WTC11 (cell line): ENCODE measurements at regions of chr16 and their contacts with region 1.

Region 1: DNA sequence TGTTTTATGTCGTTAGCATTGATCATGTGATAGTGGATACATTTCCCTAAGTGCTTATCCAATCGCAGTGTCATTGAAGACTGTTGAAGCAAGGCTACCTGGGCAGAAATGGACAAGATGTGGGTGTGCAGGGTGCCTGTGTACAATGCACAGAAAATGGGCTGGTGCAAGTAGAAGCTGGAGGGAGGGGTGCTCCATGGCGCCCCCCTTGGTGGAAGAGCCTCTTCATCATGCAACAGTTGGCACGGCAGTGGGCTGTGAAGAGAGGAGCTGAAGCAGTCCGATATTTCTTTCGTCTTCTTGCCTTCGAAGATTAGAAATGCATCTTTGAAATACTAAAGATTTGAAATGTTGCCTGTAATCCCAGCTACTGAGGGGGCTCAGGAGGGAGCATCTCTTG is 100.5 kb downstream of the PLCG2 start:
- DNase-seq: peak; percentile 68
- ATAC-seq: peak; percentile 74
- H3K4me3 Mint-ChIP-seq: no peak overlapping the region
- H3K27ac Mint-ChIP-seq: no peak overlapping the region
- H3K4me1 Mint-ChIP-seq: peaks cover 24% of the 10 kb centered on the region
- H3K27me3 Mint-ChIP-seq: no peaks in the 10 kb centered on the region
- CTCF ChIP-seq: peak; percentile 83

Region 2: DNA sequence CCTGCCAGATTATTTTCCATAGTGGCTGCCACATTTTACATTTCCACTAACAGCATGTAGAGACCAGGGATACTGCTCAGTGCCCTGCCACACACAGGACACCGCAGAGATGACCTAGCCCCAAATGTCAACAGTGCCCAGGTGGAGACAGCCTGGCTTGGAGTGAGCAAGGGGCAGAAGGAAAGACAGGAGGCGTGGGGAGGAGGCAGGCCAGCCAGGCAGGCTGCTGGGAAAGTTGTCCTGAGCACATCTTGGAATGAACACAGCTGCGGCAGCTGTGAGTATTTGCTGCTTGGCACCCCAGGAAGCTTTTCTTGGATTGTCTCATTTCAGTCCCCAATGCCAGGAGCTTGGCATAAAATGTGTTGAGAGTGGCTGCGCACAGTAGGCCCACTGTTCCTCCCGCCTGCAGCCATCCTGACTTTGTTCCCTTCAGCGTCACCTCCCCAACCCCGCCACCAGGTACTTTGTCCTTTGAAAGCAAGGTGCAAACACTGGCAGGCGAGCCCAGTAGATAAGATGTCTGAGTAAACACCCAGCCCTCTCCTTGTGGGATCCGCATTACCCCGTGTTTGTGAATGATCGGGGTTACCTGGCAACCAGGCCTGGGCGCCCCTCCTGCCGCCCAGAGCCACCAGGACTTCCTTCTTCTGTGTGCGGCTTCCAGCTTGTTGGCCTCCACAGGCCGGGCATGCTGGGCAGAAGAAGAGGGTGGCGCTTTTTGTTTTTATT is 321.0 kb before region 1 on chr16:
- CTCF ChIA-PET with region 1: no interaction called
- POLR2A ChIA-PET with region 1: no interaction called
- DNase-seq: no peak
- ATAC-seq: peak; percentile 62
- H3K4me3 Mint-ChIP-seq: no peak overlapping the region
- H3K27ac Mint-ChIP-seq: no peak overlapping the region
- H3K4me1 Mint-ChIP-seq: peaks cover 14% of the 10 kb centered on the region
- H3K27me3 Mint-ChIP-seq: no peaks in the 10 kb centered on the region
- CTCF ChIP-seq: no peak

Region 3: GRCh38 chr16:81730090-81731051 is 149.3 kb before region 1 on chr16:
- CTCF ChIA-PET with region 1: interaction called, 17 read pairs
- POLR2A ChIA-PET with region 1: no interaction called
- DNase-seq: peak; percentile 99
- ATAC-seq: peak; percentile 96
- H3K4me3 Mint-ChIP-seq: peak overlapping the region; percentile 64
- H3K27ac Mint-ChIP-seq: peak overlapping the region; percentile 96
- H3K4me1 Mint-ChIP-seq: peaks cover 30% of the 10 kb centered on the region
- H3K27me3 Mint-ChIP-seq: no peaks in the 10 kb centered on the region
- CTCF ChIP-seq: peak; percentile 80

Region 4: DNA sequence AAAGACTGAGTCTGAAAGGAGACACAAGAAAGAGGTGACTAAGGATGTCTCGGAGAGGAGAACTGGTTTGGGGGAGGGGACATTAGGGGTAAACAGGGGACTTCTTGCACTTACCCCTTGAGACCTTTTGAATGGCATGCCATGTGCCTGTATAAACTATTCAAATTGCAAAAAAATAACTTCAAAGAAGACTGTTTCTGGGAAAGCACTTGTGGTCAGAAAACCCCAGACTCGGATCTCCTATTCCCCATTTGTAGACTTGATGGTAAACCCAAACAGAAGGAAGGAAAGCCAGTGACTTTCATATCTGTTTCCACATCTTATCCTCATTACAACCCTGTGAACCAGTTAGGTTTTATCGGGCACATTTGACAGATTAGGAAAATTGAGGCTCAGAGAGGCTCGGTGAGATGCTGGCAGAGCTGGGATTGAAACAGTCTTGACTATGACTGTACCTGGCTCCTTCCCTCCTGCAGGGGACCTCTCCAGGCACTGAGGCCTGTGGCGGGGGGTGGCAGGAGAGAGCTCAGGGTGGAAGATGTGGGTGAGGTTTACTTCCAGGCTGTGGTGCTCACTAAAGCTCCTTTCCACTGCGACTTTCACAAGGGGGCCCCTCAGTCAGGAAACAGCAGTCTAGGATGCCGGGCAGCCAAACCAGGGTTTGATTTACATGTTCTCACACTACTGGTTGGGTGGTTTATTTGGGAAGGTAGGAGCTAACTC is 131.0 kb before region 1 on chr16:
- CTCF ChIA-PET with region 1: interaction called, 12 read pairs
- POLR2A ChIA-PET with region 1: no interaction called
- DNase-seq: no peak
- ATAC-seq: peak; percentile 45
- H3K4me3 Mint-ChIP-seq: no peak overlapping the region
- H3K27ac Mint-ChIP-seq: no peak overlapping the region
- H3K4me1 Mint-ChIP-seq: peaks cover 19% of the 10 kb centered on the region
- H3K27me3 Mint-ChIP-seq: peaks cover 5% of the 10 kb centered on the region
- CTCF ChIP-seq: no peak

Region 5: DNA sequence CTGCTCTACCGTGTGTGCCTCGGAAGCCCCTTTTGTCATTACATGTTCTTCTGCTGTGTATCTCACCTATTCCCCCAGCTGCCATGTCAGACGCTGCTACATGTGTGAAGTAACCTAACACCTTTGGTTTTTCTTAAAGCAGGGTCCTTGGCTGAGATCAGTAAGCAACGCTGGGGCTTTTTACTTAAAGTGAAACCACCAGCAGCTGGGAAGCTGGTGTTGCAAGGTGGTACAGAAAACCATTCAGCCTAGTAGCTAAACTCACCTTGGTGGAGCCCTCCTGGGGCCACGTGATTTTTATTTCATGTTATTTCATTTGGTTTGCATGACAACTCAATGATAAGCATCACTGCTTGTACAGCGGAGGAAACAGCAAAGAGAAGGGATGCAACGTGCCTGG is 37.9 kb before region 1 on chr16:
- CTCF ChIA-PET with region 1: interaction called, 13 read pairs
- POLR2A ChIA-PET with region 1: no interaction called
- DNase-seq: no peak
- ATAC-seq: no peak
- H3K4me3 Mint-ChIP-seq: no peak overlapping the region
- H3K27ac Mint-ChIP-seq: no peak overlapping the region
- H3K4me1 Mint-ChIP-seq: peaks cover 9% of the 10 kb centered on the region
- H3K27me3 Mint-ChIP-seq: no peaks in the 10 kb centered on the region
- CTCF ChIP-seq: no peak

Region 6: DNA sequence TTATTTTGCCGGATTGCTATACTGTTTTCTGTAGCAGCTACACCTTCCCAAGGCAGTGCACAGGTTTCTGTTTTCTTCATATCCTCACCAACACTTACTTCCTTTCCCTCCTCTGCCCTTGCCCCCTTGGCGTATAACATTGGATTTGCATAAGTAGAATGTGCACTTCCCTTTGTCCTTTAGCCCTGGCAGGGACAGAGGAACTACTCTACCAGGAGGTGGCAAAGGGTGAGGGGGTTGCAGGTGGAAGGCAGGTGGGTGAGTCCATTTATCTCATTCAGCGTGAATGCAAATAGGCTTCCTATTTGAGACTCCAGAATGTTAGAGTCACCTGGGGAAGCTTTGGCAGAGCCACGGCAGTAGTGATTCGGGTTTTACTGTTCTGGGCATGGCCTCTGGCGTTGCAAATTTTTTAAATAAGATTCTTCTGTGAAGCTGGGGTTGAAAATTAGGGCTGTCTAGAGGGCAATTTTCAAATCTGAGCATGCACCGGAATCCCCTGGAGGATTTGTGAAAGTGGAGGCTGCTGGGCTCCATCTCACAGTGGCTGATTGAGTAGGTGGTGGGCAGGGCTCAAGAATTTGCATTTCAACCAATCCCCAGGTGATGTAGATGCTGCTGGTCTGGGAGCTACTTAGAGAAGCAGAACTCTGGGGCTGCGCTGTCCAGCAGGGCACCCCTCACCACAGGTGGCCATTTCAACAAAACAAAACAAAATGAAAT is 15.8 kb before region 1 on chr16:
- CTCF ChIA-PET with region 1: interaction called, 36 read pairs
- POLR2A ChIA-PET with region 1: interaction called, 3 read pairs
- DNase-seq: peak; percentile 24
- ATAC-seq: peak; percentile 84
- H3K4me3 Mint-ChIP-seq: peak overlapping the region; percentile 41
- H3K27ac Mint-ChIP-seq: no peak overlapping the region
- H3K4me1 Mint-ChIP-seq: peaks cover 24% of the 10 kb centered on the region
- H3K27me3 Mint-ChIP-seq: peaks cover 7% of the 10 kb centered on the region
- CTCF ChIP-seq: no peak

Region 7: DNA sequence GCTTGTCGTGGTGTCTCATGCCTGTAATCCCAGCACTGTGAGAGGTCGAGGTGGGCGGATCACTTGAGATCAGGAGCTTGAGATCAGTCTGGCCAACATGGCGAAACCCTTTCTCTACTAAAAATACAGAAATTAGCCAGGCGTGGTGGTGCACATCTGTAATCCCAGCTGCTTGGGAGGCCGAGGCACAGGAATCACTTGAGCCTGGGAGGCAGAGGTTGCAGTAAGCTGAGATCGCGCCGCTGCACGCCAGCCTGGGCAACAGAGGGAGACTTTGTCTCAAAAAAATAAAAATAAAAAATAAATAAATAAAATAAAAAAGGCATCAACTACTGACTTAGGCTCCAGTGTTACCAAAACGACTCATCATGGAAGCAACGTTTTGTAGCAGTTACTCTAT is 15.0 kb after region 1 on chr16:
- CTCF ChIA-PET with region 1: interaction called, 19 read pairs
- POLR2A ChIA-PET with region 1: no interaction called
- DNase-seq: no peak
- ATAC-seq: no peak
- H3K4me3 Mint-ChIP-seq: no peak overlapping the region
- H3K27ac Mint-ChIP-seq: no peak overlapping the region
- H3K4me1 Mint-ChIP-seq: no peaks in the 10 kb centered on the region
- H3K27me3 Mint-ChIP-seq: no peaks in the 10 kb centered on the region
- CTCF ChIP-seq: no peak

Region 8: GRCh38 chr16:81905277-81905676 is 25.7 kb after region 1 on chr16:
- CTCF ChIA-PET with region 1: interaction called, 10 read pairs
- POLR2A ChIA-PET with region 1: no interaction called
- DNase-seq: peak; percentile 31
- ATAC-seq: peak; percentile 71
- H3K4me3 Mint-ChIP-seq: no peak overlapping the region
- H3K27ac Mint-ChIP-seq: no peak overlapping the region
- H3K4me1 Mint-ChIP-seq: no peaks in the 10 kb centered on the region
- H3K27me3 Mint-ChIP-seq: no peaks in the 10 kb centered on the region
- CTCF ChIP-seq: no peak

Region 9: DNA sequence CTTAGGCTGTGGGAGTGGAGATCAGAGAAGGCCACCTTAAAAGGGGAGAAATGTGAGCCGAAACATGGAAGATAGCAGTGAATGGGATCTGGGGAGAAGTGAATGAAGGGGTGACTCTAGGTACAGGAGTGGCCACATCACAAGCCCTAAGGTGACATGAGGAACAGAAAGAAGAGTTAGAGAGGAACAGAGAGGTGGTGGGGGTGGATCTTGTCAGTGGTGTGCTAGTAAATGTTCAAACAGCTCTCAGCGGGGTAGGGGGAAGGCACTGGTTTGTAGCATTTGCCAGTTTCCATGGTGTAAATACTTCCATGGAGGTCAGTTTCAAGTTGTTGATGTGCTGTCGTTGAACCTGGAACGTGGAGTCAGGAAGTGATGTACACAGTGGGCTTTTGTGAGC is 40.9 kb after region 1 on chr16:
- CTCF ChIA-PET with region 1: no interaction called
- POLR2A ChIA-PET with region 1: no interaction called
- DNase-seq: no peak
- ATAC-seq: no peak
- H3K4me3 Mint-ChIP-seq: no peak overlapping the region
- H3K27ac Mint-ChIP-seq: no peak overlapping the region
- H3K4me1 Mint-ChIP-seq: no peaks in the 10 kb centered on the region
- H3K27me3 Mint-ChIP-seq: no peaks in the 10 kb centered on the region
- CTCF ChIP-seq: no peak